Sciatic nerve (tissue), 2 donors: ENCODE measurements at regions of chr10 and their contacts with region 1.

Region 1: GRCh38 chr10:117226824-117227451 is 14.0 kb upstream of the SLC18A2 start:
- DNase-seq: no peak
- ATAC-seq: no peak

Region 2: DNA sequence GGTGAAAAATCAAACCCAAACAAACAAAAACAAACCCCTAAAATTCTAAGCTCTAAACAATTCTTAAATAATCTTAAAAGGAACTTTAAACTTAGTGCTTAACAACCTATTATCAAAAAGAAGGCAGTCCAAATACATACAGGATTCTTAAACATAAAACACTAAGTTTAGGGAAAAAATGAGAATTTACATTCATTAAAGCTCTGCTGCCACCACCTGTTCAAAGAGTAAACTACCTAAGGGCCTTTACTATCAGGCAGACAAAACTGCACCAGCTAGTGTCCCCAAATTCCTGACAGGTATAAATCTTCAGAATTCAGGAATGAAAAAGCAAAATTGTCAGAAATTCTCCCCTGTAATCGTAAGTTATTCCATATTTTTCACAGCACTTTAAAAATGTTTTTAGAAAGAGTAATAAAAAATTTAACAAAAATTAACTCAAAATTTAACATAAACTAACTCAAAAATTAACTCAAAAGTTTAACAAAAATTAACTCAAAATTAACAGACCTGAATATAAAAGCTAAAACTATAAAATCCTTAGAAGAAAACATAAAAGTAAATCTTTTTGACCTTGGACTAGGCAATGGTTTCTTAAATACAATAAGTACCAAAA is 93.2 kb after region 1 on chr10:
- intact Hi-C with region 1: loop called (anchors 10 kb)
- DNase-seq: no peak
- ATAC-seq: no peak

Region 3: GRCh38 chr10:117609095-117609795 is 382.3 kb after region 1 on chr10:
- intact Hi-C with region 1: no loop called
- DNase-seq: no peak
- ATAC-seq: peak; percentile 86